Activated CD8-positive, alpha-beta T cell treated with anti-CD3 and anti-CD28 coated beads for 36 hours (primary cell): ENCODE measurements at regions of chr11 and their contacts with region 1.

Region 1: DNA sequence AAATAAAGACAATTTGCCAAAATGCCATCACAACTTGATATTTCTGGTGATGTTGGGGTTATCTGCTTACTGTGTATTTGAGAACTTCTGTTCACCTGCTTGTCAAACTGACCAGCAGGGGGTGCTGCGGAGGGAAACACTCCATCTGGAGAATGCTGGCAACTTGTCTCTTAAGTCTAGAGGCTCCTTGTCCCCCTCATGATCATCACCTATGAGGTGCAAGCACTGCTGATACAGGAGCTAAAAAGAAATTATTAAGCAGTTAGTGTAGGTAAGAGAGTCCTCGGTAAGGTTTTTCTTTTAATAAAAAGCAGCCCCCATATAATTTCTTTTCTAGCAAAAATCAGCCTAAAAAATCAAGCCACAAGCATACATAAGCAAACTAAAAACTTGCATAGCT is 32.7 kb upstream of the GLYATL1B start:
- DNase-seq: peak; percentile 88
- ATAC-seq: peak; percentile 64
- H3K4me3 Mint-ChIP-seq: no peak overlapping the region
- H3K27ac Mint-ChIP-seq: no peak overlapping the region
- H3K4me1 Mint-ChIP-seq: peaks cover 3% of the 10 kb centered on the region
- H3K27me3 Mint-ChIP-seq: peaks cover 17% of the 10 kb centered on the region
- CTCF ChIP-seq: peak; percentile 65

Region 2: GRCh38 chr11:59069087-59069486 is 15.7 kb after region 1 on chr11:
- CTCF ChIA-PET with region 1: interaction called, 12 read pairs
- POLR2A ChIA-PET with region 1: no interaction called
- intact Hi-C with region 1: no loop called
- DNase-seq: no peak
- ATAC-seq: no peak
- H3K4me3 Mint-ChIP-seq: no peak overlapping the region
- H3K27ac Mint-ChIP-seq: no peak overlapping the region
- H3K4me1 Mint-ChIP-seq: no peaks in the 10 kb centered on the region
- H3K27me3 Mint-ChIP-seq: peaks cover 25% of the 10 kb centered on the region
- CTCF ChIP-seq: no peak

Region 3: DNA sequence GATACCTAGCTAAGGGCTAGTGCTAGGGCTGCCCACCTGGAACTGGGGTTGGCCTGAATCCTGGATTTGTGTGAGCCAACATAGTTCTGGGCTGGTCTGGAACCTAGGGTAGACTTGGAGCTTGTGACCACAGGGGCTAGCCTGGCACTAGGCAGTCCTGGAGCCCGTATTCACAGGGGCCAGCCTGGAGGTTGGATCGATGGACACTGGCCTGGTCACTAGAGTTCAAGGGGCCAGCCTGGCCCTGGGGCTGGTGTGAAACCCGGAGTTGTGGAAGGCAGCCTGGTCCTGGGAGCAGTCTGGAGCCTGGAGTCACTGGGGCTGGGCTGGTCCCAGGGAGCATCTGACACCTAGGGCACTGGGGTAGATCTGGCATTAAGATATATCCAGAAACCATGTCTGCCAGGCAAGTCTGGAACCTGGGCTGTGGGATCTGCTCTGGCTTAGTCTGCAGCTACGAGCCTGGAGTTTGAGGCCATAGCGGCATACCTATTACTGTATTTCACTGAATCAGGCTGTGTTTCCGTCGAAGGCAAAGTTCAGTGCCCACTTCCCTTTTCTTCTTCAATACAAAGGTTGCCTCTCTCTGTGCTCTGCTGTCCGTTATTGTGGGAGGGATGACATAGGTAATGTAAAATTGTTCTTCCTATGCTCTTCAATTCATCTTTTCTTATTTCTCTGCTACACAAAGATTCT is 23.6 kb after region 1 on chr11:
- CTCF ChIA-PET with region 1: interaction called, 12 read pairs
- POLR2A ChIA-PET with region 1: no interaction called
- intact Hi-C with region 1: no loop called
- DNase-seq: no peak
- ATAC-seq: no peak
- H3K4me3 Mint-ChIP-seq: no peak overlapping the region
- H3K27ac Mint-ChIP-seq: no peak overlapping the region
- H3K4me1 Mint-ChIP-seq: peaks cover 1% of the 10 kb centered on the region
- H3K27me3 Mint-ChIP-seq: peaks cover 22% of the 10 kb centered on the region
- CTCF ChIP-seq: no peak

Region 4: DNA sequence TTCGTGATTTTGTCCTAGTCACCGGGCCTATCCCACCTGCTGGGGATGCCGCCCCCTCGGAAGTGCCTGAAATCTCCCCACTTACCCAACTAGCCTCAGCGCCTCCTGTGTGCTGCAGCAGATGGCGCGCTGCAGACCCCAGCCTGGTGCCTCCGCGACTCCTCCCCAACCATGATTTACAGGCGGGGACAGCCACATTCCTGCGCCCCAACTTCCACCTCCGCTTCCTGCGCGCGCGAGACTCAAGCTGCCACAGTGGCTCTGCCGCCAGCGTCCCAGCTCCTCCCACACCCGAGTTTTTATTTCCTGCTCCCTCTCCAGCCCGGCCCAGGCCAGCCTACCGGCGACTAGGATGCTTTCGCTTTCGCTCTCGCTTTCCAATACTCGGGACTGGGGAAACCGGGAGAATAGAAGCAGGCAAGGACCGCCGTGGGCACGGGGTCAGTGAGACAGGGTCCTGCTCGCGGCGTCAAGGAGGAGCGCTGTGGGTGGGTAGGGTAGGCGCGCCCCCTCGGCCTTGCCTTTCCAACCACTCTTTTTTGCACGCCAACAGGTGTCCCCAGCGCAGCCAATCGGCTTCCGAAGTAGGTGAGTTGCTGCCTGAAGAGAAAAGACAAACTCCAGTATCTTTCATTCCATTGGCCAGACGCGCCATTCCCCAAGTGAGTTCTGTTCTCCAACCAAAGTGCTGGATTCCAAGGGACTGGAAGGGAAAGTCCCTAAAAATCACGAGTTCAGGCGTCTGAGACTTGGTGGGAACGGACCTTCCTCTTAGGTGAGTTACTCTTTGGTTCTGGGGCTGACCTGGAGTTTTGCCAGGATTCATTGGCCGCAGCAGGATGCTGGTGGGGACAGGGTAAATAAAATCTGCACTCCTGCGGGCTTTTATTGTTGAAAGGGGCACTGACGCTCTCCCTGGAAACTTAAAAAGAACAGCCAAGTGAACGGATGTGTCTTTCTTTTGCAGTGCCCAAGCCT is 89.4 kb after region 1 on chr11 and contains the start of gene FAM111A:
- CTCF ChIA-PET with region 1: interaction called, 15 read pairs
- POLR2A ChIA-PET with region 1: no interaction called
- intact Hi-C with region 1: no loop called
- DNase-seq: peak; percentile 87
- ATAC-seq: peak; percentile 79
- H3K4me3 Mint-ChIP-seq: peak within 1 kb of the TSS; percentile 93
- H3K27ac Mint-ChIP-seq: peak within 1 kb of the TSS; percentile 93
- H3K4me1 Mint-ChIP-seq: peaks cover 47% of the 10 kb centered on the region
- H3K27me3 Mint-ChIP-seq: no peaks in the 10 kb centered on the region
- CTCF ChIP-seq: no peak
- total RNA-seq, gene FAM111A: 71.8 to 74.5 TPM